Dendritic cell treated with granulocyte-macrophage colony-stimulating factor and Interleukin-4, amounts not matched to agents 40 ng/mL and 50 ng/mL, for 4 days (primary cell): ENCODE measurements at regions of chr6 and their contacts with region 1.

Region 1: GRCh38 chr6:106360410-106360988 is at the start of gene CRYBG1:
- H3K4me3 Mint-ChIP-seq: peak within 1 kb of the TSS; percentile 83
- H3K27ac Mint-ChIP-seq: peak within 1 kb of the TSS; percentile 65
- H3K4me1 Mint-ChIP-seq: peaks cover 14% of the 10 kb centered on the region
- H3K27me3 Mint-ChIP-seq: peaks cover 63% of the 10 kb centered on the region

Region 2: GRCh38 chr6:106279179-106279578 is 81.3 kb before region 1 on chr6:
- intact Hi-C with region 1: no loop called
- H3K4me3 Mint-ChIP-seq: no peak overlapping the region
- H3K27ac Mint-ChIP-seq: no peak overlapping the region
- H3K4me1 Mint-ChIP-seq: no peaks in the 10 kb centered on the region
- H3K27me3 Mint-ChIP-seq: no peaks in the 10 kb centered on the region

Region 3: DNA sequence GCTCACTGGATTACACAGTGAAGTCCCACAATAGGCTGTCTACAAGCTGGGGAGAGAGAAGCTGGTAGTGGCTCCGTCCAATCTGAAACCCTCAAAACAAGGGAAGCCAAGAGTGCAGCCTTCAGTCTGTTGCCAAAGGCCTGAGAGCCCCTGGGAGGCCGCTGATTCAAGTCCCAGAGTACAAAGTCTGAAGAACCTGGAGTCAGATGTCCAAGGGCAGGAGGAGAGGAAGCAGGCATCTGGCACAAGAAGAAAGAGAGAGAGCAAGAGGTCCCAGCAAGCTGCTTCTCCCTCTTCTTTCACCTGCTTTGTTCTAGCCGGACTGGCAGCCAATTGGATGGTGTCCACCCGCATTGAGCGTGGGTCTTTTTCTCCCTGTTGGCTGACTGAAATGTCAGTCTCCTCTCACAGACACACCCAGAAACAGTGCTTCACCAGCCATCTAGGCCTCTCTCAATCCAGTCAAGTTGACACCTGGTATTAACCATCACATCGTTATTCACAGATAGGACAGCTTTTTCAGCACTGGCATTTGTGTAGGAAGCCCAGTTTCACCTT is 51.2 kb after region 1 on chr6:
- intact Hi-C with region 1: no loop called
- H3K4me3 Mint-ChIP-seq: no peak overlapping the region
- H3K27ac Mint-ChIP-seq: no peak overlapping the region
- H3K4me1 Mint-ChIP-seq: peaks cover 13% of the 10 kb centered on the region
- H3K27me3 Mint-ChIP-seq: peaks cover 15% of the 10 kb centered on the region

Region 4: GRCh38 chr6:106439446-106439845 is 78.9 kb after region 1 on chr6:
- intact Hi-C with region 1: loop called (anchors 5 kb)
- H3K4me3 Mint-ChIP-seq: no peak overlapping the region
- H3K27ac Mint-ChIP-seq: no peak overlapping the region
- H3K4me1 Mint-ChIP-seq: peaks cover 6% of the 10 kb centered on the region
- H3K27me3 Mint-ChIP-seq: peaks cover 31% of the 10 kb centered on the region